Activated CD4-positive, alpha-beta T cell treated with anti-CD3 and anti-CD28 coated beads, Interleukin-2, amount 10 ng/mL, durations not matched to agents 7 days and 5 days (primary cell): ENCODE measurements at regions of chr12 and their contacts with region 1.

Region 1: GRCh38 chr12:122909442-122910288 is 13.7 kb upstream of the VPS37B start:
- DNase-seq: no peak
- H3K4me3 Mint-ChIP-seq: no peak overlapping the region
- H3K27ac Mint-ChIP-seq: no peak overlapping the region
- H3K4me1 Mint-ChIP-seq: peaks cover 1% of the 10 kb centered on the region
- H3K27me3 Mint-ChIP-seq: peaks cover 7% of the 10 kb centered on the region

Region 2: DNA sequence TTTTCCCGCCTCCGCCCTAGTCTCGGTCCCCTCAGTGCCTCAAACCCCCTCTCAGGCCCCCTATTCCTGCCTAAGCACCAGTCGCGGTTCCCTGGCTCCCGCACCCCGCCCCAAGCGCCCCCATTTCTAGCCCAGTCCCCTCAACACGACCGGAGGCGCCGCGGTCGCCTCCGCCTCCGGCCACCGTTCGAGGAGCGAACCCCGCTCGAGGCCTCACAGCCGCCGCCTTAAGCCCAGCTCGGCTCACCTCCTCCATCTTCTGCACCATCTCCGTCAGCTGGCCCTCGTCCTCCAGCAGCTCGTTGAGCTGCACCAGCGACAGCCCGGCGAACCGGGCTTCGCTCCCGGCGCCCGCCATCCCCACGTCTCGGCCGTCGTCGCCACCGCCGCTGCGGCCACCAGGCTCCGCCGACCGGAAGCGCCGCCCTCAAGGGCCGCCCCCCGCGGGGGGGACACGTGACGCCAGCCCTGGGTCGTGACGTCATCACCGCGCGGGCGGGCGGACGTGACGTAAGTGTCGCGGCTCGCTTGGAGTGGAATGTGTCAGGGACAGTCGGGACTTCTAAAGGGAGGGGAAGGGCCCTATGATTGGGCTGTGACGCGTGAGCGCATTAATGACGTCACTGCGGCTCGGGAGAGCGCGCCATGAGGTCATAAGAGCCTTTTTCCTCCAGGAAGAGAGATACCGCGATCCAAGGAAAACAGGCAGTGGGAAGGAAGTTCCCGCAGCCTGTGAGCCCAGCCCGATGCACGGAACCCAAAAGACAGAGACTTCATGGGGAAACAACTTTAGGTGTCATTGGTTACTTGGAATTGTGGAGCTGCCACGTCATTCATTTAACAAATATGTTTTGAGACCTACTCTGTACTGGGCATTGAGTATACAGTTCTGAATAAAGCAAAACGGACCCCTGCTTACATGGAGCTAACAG is 13.7 kb before region 1 on chr12 and contains the start of gene VPS37B:
- CTCF ChIA-PET with region 1: interaction called, 10 read pairs
- POLR2A ChIA-PET with region 1: interaction called, 4 read pairs
- DNase-seq: peak; percentile 87
- H3K4me3 Mint-ChIP-seq: peak within 1 kb of the TSS; percentile 91
- H3K27ac Mint-ChIP-seq: peak within 1 kb of the TSS; percentile 95
- H3K4me1 Mint-ChIP-seq: peaks cover 87% of the 10 kb centered on the region
- H3K27me3 Mint-ChIP-seq: peaks cover 7% of the 10 kb centered on the region
- total RNA-seq, gene VPS37B: 23.0 to 23.7 TPM